ENCODE measurements at regions of chr20 and their contacts with region 1.

Region 1: DNA sequence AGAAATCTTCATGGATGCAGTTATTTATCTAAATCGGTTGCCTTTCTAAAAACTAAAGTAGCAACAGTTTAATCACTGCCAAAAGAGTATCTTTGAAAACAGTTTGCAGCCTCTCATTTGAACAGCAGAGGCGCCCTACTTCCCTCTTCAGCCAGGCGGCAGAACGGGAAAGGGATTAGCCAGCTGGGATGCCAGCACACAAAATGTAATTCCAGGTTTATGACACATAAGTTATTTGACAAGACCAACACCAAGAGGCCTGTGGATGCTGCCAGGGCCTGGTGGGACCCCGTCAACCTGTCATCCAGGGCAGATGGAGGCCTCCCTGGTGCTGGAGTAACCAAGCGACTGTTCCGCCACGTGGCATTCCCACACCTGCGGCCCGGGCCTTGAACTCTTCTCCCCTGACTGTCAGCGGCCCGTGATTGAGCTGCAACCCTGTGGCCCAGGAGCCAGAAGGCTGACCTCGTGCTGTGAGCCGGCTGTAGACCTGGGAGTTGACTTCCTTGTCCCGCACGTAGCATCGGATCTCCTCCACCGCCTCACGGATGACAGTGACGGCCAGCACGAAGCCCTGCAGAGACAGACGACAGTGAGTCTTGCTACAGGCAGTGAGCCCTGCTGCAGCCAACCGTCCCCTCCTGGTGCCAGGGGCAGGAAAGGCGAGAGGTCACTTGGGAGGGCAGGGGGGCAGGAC is 55.5 kb downstream of the ATP9A start:
- DNase-seq: no peak
- ATAC-seq: no peak
- H3K4me3 Mint-ChIP-seq: no peak overlapping the region
- H3K27ac Mint-ChIP-seq: no peak overlapping the region
- H3K4me1 Mint-ChIP-seq: peaks cover 15% of the 10 kb centered on the region
- H3K27me3 Mint-ChIP-seq: no peaks in the 10 kb centered on the region

Region 2: GRCh38 chr20:51695574-51696303 is 16.9 kb before region 1 on chr20:
- CTCF ChIA-PET with region 1: interaction called, 10 read pairs
- POLR2A ChIA-PET with region 1: no interaction called
- intact Hi-C with region 1: no loop called
- DNase-seq: peak; percentile 41
- ATAC-seq: peak; percentile 78
- H3K4me3 Mint-ChIP-seq: no peak overlapping the region
- H3K27ac Mint-ChIP-seq: no peak overlapping the region
- H3K4me1 Mint-ChIP-seq: peaks cover 16% of the 10 kb centered on the region
- H3K27me3 Mint-ChIP-seq: peaks cover 18% of the 10 kb centered on the region

Region 3: DNA sequence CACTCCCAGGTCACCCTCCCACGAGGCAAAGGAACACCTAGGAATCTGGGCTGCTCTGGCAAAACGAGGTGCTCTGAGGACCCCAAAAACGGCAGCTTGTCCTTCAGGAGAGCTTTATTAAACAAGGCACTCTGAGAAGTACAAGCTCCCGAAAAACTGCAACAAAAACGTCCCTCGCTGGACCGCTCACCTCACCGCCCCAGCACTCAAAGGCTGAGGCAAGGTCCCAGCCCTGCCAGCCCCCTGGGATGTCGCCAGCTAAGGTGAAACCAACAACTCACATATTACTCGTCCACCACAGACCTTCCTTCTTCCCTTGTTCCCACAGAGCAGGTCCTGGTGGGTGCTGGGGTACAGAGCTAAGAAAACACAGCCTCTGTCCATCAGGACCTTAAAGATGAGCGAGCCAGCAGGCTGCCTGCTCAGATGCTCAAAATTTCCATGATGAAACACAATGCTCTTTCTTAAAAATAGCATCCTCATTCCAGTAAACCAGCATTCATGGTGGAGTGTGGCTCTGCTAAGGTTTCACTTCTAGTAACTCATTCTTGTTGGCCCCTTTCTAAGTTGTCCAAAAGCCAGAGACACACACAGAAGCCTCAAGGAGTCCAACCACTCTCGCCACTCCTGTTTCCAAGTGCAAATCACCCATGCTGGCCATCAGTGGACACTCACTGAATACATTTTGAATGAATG is 19.6 kb after region 1 on chr20:
- CTCF ChIA-PET with region 1: no interaction called
- POLR2A ChIA-PET with region 1: no interaction called
- intact Hi-C with region 1: no loop called
- DNase-seq: peak; percentile 40
- ATAC-seq: peak; percentile 80
- H3K4me3 Mint-ChIP-seq: peak overlapping the region; percentile 67
- H3K27ac Mint-ChIP-seq: peak overlapping the region; percentile 87
- H3K4me1 Mint-ChIP-seq: peaks cover 13% of the 10 kb centered on the region
- H3K27me3 Mint-ChIP-seq: peaks cover 3% of the 10 kb centered on the region